ENCODE measurements at regions of chr20 and their contacts with region 1.

Region 1: DNA sequence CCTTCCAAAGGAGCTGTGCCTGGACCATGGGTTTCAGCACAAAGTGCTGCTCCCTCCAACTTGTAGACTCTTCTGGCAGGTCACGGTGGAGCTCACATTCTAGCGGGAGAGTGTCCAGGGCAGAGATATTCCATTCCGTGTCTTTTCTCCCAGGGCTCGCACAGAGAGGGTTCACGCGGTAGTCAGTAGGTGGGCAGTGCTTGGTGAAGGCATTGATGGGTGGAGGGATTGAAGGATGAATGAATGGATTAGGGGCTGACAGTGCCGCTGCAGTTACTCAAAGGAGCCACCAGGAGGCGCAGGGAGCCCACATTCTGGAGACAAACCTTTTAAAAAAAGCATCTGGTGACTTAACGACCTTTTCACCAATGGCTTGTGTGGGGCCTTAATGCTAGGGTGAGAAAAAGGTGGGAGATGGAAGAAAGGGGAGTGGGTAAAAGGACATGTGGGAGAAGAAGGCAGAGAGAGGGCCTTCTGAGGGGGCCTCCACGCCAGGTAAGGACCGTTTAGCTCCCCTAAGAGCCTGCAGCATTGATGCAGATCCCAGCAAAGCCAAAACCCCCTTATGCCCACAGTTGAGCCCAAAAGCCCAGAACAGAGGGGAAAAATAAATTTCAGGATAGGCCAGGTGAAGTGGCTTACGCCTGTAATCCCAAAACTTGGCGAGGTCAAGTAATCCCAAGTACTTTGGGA is 17.5 kb upstream of the FAM110A start:
- DNase-seq: no peak
- H3K4me3 ChIP-seq: no peak overlapping the region
- H3K27ac ChIP-seq: no peak overlapping the region
- H3K4me1 ChIP-seq: peaks cover 0 to 6% (median 5%) of the 10 kb centered on the region in 4 donors
- H3K27me3 ChIP-seq: peaks cover 0 to 54% (median 2%) of the 10 kb centered on the region in 4 donors
- CTCF ChIP-seq: peak; percentile 95 to 99 (median 97)
- EP300 ChIP-seq: no peak
- POLR2A ChIP-seq: no peak

Region 2: DNA sequence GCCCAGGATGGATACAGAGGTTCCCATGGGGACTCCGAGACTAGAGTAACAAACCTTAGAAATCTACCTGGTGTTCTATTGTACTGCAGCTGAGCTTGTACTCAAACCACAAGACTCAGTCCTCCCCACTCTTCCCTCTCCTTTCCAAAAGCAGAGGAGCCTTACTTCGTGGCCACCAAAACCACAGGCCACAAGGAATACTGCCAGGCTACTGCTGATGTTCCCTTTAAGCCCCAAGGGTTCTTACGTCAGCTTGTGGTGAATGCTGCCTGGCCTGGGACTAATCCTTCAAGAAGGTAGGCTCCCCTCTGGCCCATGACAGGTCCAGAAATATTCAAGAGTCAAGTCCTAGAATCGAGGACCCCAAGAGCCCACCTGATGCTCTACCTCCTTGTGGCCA is 616.1 kb before region 1 on chr20:
- intact Hi-C with region 1: no loop called
- DNase-seq: no peak
- H3K4me3 ChIP-seq: no peak overlapping the region
- H3K27ac ChIP-seq: no peak overlapping the region
- H3K4me1 ChIP-seq: no peaks in the 10 kb centered on the region
- H3K27me3 ChIP-seq: peaks cover 0 to 17% (median 0%) of the 10 kb centered on the region in 4 donors
- CTCF ChIP-seq: no peak
- EP300 ChIP-seq: no peak
- POLR2A ChIP-seq: no peak

Region 3: GRCh38 chr20:775679-776135 is 40.4 kb before region 1 on chr20:
- intact Hi-C with region 1: no loop called
- DNase-seq: no peak
- H3K4me3 ChIP-seq: no peak overlapping the region
- H3K27ac ChIP-seq: no peak overlapping the region
- H3K4me1 ChIP-seq: no peaks in the 10 kb centered on the region
- H3K27me3 ChIP-seq: peaks cover 0 to 51% (median 2%) of the 10 kb centered on the region in 4 donors
- CTCF ChIP-seq: no peak
- EP300 ChIP-seq: no peak
- POLR2A ChIP-seq: no peak

Region 4: GRCh38 chr20:956330-956951 is 140.4 kb after region 1 on chr20:
- intact Hi-C with region 1: loop called (anchors 1 kb)
- DNase-seq: no peak
- H3K4me3 ChIP-seq: no peak overlapping the region
- H3K27ac ChIP-seq: no peak overlapping the region
- H3K4me1 ChIP-seq: peaks cover 3 to 6% (median 4%) of the 10 kb centered on the region in 4 donors
- H3K27me3 ChIP-seq: peaks cover 0 to 85% (median 14%) of the 10 kb centered on the region in 4 donors
- CTCF ChIP-seq: peak; percentile 89 to 95 (median 89)
- EP300 ChIP-seq: no peak
- POLR2A ChIP-seq: no peak

Region 5: DNA sequence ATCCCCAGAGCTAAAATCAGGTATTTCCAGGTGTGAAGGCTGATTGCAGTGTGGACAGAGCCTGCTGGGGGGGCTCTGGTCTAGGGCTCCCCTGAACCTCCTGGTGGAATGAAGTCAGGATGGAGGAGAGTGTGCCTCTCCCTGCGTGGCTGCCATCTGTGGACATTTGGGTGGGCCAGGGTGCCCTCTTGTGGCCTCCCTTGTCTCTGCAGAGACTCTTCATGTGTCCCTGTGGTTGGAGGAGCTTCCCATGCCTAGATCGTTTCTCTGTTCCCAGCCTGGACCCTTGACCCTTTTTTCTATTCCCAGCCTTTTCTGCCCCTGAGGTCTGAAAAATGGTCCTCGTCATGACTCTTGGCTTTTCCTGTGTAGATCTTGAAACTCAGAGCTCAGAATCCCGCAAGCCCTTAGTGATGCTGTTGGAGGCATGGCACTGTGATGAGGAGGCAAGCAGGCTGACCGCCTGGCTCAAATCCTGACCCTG is 292.4 kb after region 1 on chr20:
- intact Hi-C with region 1: loop called (anchors 5 kb)
- DNase-seq: peak; percentile 92
- H3K4me3 ChIP-seq: no peak overlapping the region
- H3K27ac ChIP-seq: no peak overlapping the region
- H3K4me1 ChIP-seq: peaks cover 0 to 11% (median 1%) of the 10 kb centered on the region in 4 donors
- H3K27me3 ChIP-seq: no peaks in the 10 kb centered on the region
- CTCF ChIP-seq: peak; percentile 49 to 73 (median 60)
- EP300 ChIP-seq: no peak
- POLR2A ChIP-seq: no peak

Measured in esophagus muscularis mucosa (tissue), 4 donors.